Activated T-helper 1 cell treated with anti-CD3 and anti-CD28 coated beads, Interleukin-12 subunit alpha, Interleukin-12 subunit beta, Interleukin-2, Interleukin-4 antibody, amounts not matched to agents 30 ng/mL and 10 ng/mL and 1 ng/mL, durations not matched to agents 14 hours and 24 hours and 36 hours (primary cell): ENCODE measurements at regions of chr16 and their contacts with region 1.

Region 1: GRCh38 chr16:54286090-54286993 is at the start of gene IRX3:
- DNase-seq: peak; percentile 9
- H3K4me3 Mint-ChIP-seq: peak within 1 kb of the TSS; percentile 81
- H3K27ac Mint-ChIP-seq: peak within 1 kb of the TSS; percentile 88
- H3K4me1 Mint-ChIP-seq: peaks cover 15% of the 10 kb centered on the region
- H3K27me3 Mint-ChIP-seq: peaks cover 61% of the 10 kb centered on the region
- total RNA-seq, gene IRX3: 1.1 and 1.4 TPM in 2 replicates

Region 2: GRCh38 chr16:53549970-53550690 is 736.2 kb before region 1 on chr16:
- intact Hi-C with region 1: loop called (anchors 5 kb)
- DNase-seq: peak; percentile 14
- H3K4me3 Mint-ChIP-seq: no peak overlapping the region
- H3K27ac Mint-ChIP-seq: no peak overlapping the region
- H3K4me1 Mint-ChIP-seq: peaks cover 38% of the 10 kb centered on the region
- H3K27me3 Mint-ChIP-seq: peaks cover 18% of the 10 kb centered on the region

Region 3: GRCh38 chr16:53892155-53892554 is 394.2 kb before region 1 on chr16:
- intact Hi-C with region 1: loop called (anchors 1 kb)
- DNase-seq: peak; percentile 39
- H3K4me3 Mint-ChIP-seq: no peak overlapping the region
- H3K27ac Mint-ChIP-seq: peak overlapping the region; percentile 11
- H3K4me1 Mint-ChIP-seq: peaks cover 38% of the 10 kb centered on the region
- H3K27me3 Mint-ChIP-seq: no peaks in the 10 kb centered on the region

Region 4: GRCh38 chr16:54165174-54165911 is 121.0 kb before region 1 on chr16:
- intact Hi-C with region 1: no loop called
- DNase-seq: no peak
- H3K4me3 Mint-ChIP-seq: no peak overlapping the region
- H3K27ac Mint-ChIP-seq: no peak overlapping the region
- H3K4me1 Mint-ChIP-seq: no peaks in the 10 kb centered on the region
- H3K27me3 Mint-ChIP-seq: peaks cover 3% of the 10 kb centered on the region

Region 5: DNA sequence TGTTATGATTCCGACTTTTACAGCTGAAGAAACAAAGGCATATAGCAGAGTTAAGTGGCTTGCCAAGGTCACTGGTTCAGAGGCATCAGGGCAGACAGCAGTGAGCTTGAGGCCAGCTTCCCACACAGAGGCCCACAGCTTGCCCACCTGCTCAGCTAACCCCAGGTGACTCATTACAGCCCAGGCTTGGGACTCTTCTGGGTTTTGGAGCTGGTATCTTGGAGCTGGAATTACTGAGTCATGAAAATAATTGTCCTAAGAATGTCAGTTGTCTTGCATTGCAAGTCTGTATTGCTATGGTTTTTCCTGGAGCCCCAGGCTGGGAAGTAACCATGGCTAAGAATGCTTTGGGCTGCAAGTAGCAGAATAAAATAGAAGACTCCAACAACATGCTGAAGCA is 32.6 kb after region 1 on chr16:
- intact Hi-C with region 1: no loop called
- DNase-seq: no peak
- H3K4me3 Mint-ChIP-seq: no peak overlapping the region
- H3K27ac Mint-ChIP-seq: no peak overlapping the region
- H3K4me1 Mint-ChIP-seq: no peaks in the 10 kb centered on the region
- H3K27me3 Mint-ChIP-seq: peaks cover 5% of the 10 kb centered on the region

Region 6: DNA sequence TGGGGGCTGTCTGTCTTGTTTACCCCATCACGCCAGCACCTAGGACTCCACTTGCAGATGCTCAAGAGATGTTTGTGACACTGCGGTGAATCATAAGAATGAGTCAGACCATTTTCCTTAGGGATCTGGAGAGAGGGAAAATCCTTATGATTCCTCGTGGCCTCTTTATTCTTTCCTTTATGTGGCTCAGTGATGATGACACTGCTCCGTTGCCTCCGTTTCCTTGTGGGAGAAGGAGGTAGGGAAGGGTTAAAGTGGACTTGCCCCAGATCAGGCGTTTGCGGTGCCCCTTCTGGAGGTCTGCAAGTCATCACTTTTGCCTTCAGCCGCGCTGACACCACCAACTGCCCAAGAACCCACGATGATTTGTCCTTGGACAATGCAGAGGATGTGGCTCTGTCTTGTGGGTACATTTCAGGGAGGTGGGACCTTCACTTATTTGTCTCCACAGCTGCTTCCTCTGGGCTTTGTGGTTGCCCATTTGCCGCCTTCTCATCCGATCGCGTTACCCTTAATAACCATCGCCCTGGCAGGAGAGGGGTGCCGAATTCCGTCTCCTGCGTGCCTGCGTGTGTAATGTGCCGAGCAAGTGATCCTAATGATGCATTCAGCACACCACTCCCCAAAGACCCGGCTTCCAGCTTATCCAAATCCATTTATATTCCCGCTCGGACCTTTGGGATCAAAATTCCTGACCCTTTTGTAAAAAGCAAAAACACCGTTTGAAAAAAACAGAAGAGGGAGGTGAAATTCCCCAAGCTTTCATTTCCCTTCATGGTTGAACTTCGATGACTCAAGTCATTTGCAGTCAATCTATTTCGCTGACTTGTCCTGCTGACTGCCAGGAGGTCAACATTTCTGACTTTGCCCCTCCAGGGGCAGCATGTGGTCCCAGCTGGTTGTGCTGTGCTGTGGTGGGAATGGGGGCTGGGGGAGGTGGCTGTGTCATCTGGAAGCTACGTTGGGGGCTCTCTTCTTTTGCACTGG is 87.5 kb after region 1 on chr16:
- intact Hi-C with region 1: loop called (anchors 5 kb)
- DNase-seq: no peak
- H3K4me3 Mint-ChIP-seq: peak overlapping the region; percentile 19
- H3K27ac Mint-ChIP-seq: no peak overlapping the region
- H3K4me1 Mint-ChIP-seq: no peaks in the 10 kb centered on the region
- H3K27me3 Mint-ChIP-seq: peaks cover 26% of the 10 kb centered on the region

Region 7: DNA sequence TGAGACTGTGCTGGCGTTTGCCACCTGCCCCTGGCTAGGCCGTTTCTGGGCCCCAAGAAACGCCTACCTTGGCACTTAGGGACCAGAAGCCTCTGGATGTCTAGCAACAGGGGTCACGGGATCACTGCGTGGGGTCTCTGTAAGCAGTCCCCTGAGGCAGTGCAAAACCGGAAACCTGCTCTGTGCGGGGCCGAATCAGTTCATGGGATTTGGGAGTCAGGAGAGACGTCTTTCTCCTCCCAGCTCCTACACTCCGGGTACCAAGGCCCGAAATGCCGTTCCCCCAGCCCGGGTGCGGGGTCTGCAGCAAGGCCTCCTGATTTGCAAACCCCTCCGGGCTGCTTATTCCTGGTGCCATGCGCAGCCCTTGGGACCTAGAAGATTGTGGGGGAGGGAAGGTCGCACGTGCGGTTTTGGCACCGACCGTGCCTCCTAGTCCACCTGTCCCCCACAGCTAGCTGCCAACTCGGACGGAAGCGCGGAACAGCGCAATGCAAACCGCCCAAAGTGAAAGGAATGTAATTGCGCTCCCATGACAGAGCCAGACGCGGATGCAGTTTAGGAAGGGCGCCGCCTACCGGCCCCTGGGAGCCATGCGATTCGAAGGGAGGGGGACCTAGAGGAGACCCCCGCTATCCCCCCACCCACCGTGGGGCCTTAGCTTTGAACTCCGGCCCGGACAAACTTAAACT is 650.8 kb after region 1 on chr16:
- intact Hi-C with region 1: loop called (anchors 2 kb)
- DNase-seq: no peak
- H3K4me3 Mint-ChIP-seq: no peak overlapping the region
- H3K27ac Mint-ChIP-seq: peak overlapping the region; percentile 75
- H3K4me1 Mint-ChIP-seq: no peaks in the 10 kb centered on the region
- H3K27me3 Mint-ChIP-seq: peaks cover 79% of the 10 kb centered on the region